Aorta (tissue), 5 donors: ENCODE measurements at regions of chr19 and their contacts with region 1.

Region 1: GRCh38 chr19:17305517-17306284 is at the start of gene MRPL34:
- DNase-seq: peak; percentile 97 to 98
- ATAC-seq: peak; percentile 80
- H3K4me3 ChIP-seq: peak within 1 kb of the TSS; percentile 20 to 53
- H3K27ac ChIP-seq: peak within 1 kb of the TSS in 1 of 2 donors; percentile 68
- H3K4me1 ChIP-seq: no peaks in the 10 kb centered on the region
- H3K27me3 ChIP-seq: no peaks in the 10 kb centered on the region
- total RNA-seq, gene MRPL34: 41.9 to 53.9 TPM

Region 2: GRCh38 chr19:17336872-17337722 is 31.4 kb after region 1 on chr19 and contains the start of gene GTPBP3:
- intact Hi-C with region 1: loop called in 1 of 2 experiments (anchors 2 kb)
- DNase-seq: peak; percentile 98
- ATAC-seq: peak; percentile 94
- H3K4me3 ChIP-seq: peak within 1 kb of the TSS; percentile 78 to 85
- H3K27ac ChIP-seq: peak within 1 kb of the TSS; percentile 90 to 95
- H3K4me1 ChIP-seq: no peaks in the 10 kb centered on the region
- H3K27me3 ChIP-seq: no peaks in the 10 kb centered on the region
- total RNA-seq, gene GTPBP3: 16.7 to 27.7 TPM

Region 3: GRCh38 chr19:17390665-17391370 is 85.1 kb after region 1 on chr19:
- intact Hi-C with region 1: loop called in 1 of 2 experiments (anchors 5 kb)
- DNase-seq: peak; percentile 96 to 98
- ATAC-seq: peak; percentile 97
- H3K4me3 ChIP-seq: peak overlapping the region; percentile 27 to 58
- H3K27ac ChIP-seq: no peak overlapping the region
- H3K4me1 ChIP-seq: no peaks in the 10 kb centered on the region
- H3K27me3 ChIP-seq: no peaks in the 10 kb centered on the region

Region 4: GRCh38 chr19:17539238-17540117 is 233.8 kb after region 1 on chr19:
- intact Hi-C with region 1: no loop called
- DNase-seq: peak; percentile 97 to 98
- ATAC-seq: peak; percentile 89
- H3K4me3 ChIP-seq: no peak overlapping the region
- H3K27ac ChIP-seq: no peak overlapping the region
- H3K4me1 ChIP-seq: no peaks in the 10 kb centered on the region
- H3K27me3 ChIP-seq: no peaks in the 10 kb centered on the region